OCI-LY7 (cell line): ENCODE measurements at regions of chr11 and their contacts with region 1.

Region 1: GRCh38 chr11:76734456-76735420 is 48.4 kb upstream of the TSKU start:
- DNase-seq: no peak
- H3K4me3 ChIP-seq: no peak overlapping the region
- H3K27ac ChIP-seq: no peak overlapping the region
- H3K4me1 ChIP-seq: no peaks in the 10 kb centered on the region
- CTCF ChIP-seq: no peak

Region 2: GRCh38 chr11:76307396-76307795 is 427.3 kb before region 1 on chr11:
- CTCF ChIA-PET with region 1: no interaction called
- POLR2A ChIA-PET with region 1: no interaction called
- intact Hi-C with region 1: no loop called
- DNase-seq: no peak
- H3K4me3 ChIP-seq: no peak overlapping the region
- H3K27ac ChIP-seq: no peak overlapping the region
- H3K4me1 ChIP-seq: no peaks in the 10 kb centered on the region
- CTCF ChIP-seq: no peak

Region 3: DNA sequence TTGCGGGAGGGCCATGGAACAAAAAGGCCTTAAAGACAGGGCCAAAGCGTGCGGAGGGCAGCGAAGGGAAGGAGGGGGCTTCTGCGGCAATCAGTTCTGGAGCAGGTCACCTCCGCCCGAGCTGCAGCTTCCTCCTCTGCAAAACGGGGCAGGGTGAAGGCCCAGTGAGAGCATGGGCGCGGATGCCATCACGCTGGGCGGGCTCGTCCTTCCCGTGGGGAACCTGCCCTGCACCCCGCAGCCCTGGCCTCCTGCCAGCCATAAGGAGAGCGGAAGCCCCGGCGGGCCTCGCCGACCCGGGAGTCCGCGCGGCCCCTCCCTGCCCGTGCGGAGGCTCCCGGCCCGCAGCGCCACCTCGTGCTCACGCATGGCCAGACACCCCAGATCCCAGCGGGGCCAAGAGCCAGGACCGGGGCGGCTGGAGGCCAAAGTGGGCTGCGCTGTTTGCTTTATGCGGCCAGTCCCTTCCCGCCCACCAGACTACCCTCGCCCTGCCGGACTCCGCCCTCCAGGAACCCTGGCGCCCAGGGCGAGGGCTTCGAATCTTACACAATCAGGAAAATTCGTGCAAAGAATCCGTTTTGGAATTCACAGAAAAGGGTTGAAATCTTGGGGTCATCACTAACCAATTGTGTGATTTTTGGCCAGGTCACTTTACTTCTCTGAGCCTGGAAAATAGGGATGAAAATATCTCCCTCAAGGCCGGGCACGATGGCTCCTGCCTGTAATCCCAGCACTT is 64.5 kb after region 1 on chr11:
- CTCF ChIA-PET with region 1: interaction called, 5 read pairs
- POLR2A ChIA-PET with region 1: no interaction called
- intact Hi-C with region 1: loop called (anchors 1 kb)
- DNase-seq: peak; percentile 58
- H3K4me3 ChIP-seq: no peak overlapping the region
- H3K27ac ChIP-seq: no peak overlapping the region
- H3K4me1 ChIP-seq: no peaks in the 10 kb centered on the region
- CTCF ChIP-seq: peak; percentile 76

Region 4: GRCh38 chr11:76927160-76927559 is 192.4 kb after region 1 on chr11:
- CTCF ChIA-PET with region 1: no interaction called
- POLR2A ChIA-PET with region 1: no interaction called
- intact Hi-C with region 1: no loop called
- DNase-seq: no peak
- H3K4me3 ChIP-seq: no peak overlapping the region
- H3K27ac ChIP-seq: no peak overlapping the region
- H3K4me1 ChIP-seq: no peaks in the 10 kb centered on the region
- CTCF ChIP-seq: no peak